GM13977 (cell line): ENCODE measurements at regions of chr6 and their contacts with region 1.

Region 1: GRCh38 chr6:44172731-44173500 is 14.3 kb downstream of the CAPN11 start:
- DNase-seq: peak; percentile 87
- CTCF ChIP-seq: peak; percentile 91

Region 2: DNA sequence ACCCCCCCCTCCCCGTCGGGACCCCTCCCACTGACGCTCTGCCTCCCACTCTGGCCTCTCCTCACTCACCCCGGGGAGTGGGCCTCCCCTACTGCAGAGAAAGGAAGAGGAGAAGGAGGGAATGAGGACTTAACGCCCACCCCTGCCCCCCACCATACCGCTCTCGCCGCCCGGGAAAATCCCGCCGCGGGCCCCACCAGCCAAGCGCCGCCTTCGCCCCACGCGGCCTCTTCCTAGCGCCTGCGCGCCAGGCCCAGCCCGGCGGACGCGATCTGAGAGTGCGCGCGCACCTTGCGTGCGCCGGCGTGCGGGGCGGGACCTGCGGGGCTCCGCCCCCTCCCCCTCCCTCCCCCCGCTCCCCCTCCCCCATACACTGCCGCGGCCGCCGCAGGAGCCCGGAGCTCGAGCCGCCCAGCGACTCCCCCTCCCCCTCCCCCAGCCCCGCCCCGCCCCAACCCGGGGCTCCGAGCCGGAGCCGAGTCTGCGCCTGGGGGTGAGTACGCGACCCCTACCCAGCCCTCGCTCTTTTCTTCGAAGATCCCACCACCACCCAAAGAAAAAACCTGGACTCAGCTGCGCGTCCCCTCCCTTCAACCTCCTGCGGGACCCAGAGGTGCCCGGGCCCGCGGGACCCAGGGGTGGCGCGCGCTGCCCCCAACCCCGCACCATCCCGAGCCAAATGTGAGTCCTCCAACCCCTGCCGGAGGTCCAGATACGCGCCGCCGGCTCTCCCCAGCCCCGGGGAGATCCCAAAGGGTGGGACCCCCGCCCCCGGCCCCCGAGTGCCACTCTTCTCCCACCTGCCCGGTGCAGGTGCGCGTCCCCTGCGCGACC is 45.5 kb before region 1 on chr6 and contains the starts of genes MRPL14 and TMEM63B:
- in situ Hi-C with region 1: no loop called
- DNase-seq: peak; percentile 100
- CTCF ChIP-seq: no peak

Region 3: DNA sequence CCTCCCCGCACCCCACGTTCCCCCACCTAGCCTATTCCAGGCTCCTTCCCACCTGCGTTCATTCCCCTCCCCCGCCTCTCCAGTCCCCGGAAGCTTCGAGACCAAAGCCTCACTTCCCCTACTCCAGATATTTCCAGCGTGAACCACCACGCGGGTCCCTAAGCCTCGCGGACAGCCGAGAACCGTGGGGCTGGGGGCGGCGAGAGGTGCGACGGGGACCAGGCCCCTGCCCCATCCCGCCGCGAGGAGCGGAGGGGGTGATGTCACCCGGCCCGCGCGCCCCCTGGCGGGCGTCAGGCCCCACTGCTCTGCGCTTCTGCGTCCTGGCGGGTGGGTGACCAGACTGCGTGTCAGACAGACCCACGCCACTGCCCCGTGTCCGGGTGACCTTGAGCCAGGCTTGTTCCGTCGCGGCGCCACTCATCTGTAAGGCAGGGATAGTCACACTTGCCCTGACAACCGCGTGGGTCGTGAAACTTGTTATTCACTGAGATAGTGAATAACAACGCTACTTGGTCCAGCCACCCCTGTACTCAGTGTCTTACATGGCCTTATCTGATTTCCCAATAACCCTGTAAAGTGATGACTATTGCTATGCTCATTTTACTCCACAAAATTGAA is 65.0 kb after region 1 on chr6:
- in situ Hi-C with region 1: loop called (anchors 5 kb)
- DNase-seq: peak; percentile 87
- CTCF ChIP-seq: peak; percentile 98

Region 4: DNA sequence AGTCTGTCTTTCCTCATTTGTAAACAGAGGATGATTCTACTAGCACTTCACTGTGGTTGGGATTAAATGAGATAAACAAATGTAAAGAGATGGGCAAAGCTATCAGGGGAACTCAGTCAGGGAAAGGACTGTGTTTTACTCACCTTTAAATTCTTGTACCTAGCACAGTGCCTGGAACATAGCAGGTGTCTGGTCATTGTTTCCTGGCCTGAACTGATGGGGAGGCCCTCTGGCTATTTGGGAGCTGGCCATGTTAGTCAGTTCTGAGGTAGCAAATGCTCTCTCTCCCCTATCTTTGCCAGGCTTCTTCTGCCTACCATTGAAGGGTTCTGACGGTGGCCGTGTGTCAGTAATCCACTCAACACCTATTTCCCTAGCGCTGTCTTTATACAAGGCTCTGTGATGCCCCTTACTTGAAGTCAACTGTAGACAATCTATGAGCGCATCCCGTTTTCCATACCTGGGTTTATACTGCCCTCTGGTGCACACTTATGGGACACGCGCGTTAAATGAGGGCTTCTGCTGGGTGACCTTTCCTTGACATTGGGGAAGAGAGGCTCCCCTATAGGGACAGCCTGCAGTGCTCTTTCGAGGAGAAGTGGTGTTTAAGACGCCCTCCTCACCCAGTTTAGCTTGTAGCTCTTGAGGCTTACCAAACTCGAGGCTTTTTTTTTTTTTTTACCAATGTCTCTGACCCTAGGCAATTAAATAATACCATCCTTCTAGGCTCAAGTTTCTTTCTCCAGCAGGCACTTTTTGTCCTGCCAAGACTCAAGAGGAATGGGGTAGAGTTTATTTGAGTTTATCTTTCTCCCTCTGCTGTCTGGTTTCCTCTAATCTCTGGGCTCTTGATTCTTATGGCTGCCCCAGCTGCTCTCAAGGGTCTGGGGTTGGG is 165.6 kb after region 1 on chr6:
- in situ Hi-C with region 1: loop called (anchors 25 kb)
- DNase-seq: peak; percentile 77
- CTCF ChIP-seq: peak; percentile 84